ENCODE measurements at regions of chr19 and their contacts with region 1.

Region 1: GRCh38 chr19:17390665-17391370 is 3.2 kb downstream of the CCDC194 start:
- DNase-seq: peak; percentile 92

Region 2: DNA sequence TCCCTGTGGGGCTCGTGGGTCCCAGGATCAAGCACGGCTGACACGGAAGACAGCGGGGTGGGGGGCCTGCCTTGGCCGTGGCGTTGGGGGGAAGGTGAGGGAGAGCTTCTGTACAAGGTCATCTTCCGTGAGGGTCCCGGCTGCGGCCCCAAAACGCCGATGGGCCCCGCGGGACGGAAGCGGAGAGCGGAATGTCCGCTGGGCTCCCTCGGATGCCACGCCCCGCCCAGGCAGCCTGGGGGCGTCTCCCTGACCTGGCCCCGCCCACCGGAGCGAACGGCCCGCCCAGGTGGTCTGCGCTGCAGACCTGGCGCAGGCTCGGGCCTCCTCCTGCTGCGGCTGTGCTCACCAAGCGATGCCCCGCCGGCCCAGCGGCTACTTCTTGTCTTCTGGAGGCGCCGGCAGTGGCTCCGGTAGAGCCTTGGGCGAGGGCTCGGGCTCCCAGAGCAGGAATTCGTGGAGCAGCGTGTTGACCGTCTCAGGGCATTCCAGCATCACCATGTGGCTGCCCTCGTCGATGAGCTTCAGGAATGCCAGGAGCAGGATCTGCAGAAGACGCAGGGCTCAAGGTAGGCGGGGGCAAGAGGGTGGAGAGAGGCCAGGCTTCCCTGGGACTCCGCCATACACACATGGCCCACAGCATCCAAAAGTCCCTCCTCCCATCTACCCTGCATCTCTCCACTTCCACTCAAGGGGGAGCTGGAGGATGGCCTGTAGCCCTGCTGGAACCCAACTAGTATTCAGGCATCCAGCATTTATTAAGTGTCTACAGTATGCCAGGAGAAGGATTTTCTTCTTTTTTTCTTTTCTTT is 98.3 kb before region 1 on chr19:
- intact Hi-C with region 1: loop called (anchors 1 kb)
- DNase-seq: peak; percentile 82

Region 3: DNA sequence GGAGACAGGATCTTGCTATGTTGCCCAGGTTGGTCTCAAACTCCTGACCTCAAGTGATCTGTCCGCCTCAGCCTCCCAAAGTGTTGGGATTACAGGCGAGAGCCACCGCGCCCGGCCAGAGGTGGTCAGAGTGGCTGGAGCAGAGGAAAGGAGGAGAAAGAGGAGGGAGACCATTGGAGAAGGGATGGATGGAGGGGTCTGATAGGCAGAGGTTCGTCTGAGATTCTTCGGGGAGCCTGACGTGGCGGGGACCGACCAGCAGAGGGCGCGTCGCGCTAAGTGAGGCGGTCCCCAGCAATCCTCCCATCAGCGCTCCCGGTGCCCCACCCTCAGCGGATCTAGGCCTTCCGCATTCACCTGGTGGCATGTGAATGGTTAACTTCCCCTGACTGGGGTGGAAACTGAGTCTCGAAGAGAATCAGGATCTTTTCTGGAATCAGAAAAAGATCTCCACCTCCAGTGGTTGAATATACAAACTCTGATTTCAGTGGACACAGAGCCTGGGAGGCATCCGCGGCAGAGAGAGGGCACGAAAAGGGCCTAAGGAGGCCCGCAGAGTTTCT is 44.6 kb before region 1 on chr19:
- intact Hi-C with region 1: loop called (anchors 1 kb)
- DNase-seq: peak; percentile 89

Region 4: GRCh38 chr19:17469481-17470067 is 78.8 kb after region 1 on chr19:
- intact Hi-C with region 1: loop called (anchors 5 kb)
- DNase-seq: peak; percentile 96

Region 5: DNA sequence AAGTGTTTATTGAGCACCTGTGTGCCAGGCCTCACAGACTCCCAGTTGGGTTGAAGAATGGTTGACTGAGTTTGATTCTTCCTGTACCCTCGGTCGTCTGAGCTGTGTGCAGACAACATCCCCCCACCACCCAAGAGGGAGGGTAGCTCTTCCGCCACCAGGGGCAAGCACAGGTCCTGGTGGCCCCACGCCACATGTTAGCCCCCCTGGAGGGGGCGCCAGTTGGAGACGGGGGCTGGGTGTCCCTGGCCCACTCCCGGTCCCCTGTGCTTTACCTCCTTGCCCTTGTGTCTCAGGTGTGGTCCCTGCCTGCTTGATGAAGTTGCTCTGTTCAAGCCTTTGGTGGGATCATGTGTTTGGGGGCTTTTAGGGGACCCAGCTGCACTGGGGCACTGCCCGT is 191.8 kb after region 1 on chr19:
- intact Hi-C with region 1: no loop called
- DNase-seq: no peak

Measured in cardiac septum (tissue), 1 donor.